ENCODE measurements at regions of chr5 and their contacts with region 1.

Region 1: GRCh38 chr5:56056875-56057274 is 62.1 kb upstream of the IL6ST start:
- DNase-seq: peak; percentile 85
- ATAC-seq: peak; percentile 78
- H3K4me3 ChIP-seq: 0 out of 2 replicates have a peak overlapping the region, but pooled peaks have one; percentile 8
- H3K27ac ChIP-seq: peak overlapping the region; percentile 47; the same call in 1 of the 2 replicates
- H3K4me1 ChIP-seq: peaks cover 41% of the 10 kb centered on the region
- H3K27me3 ChIP-seq: no peaks in the 10 kb centered on the region
- CTCF ChIP-seq: no peak
- EP300 ChIP-seq: peak in 1 of 2 experiments; percentile 48; a peak in 1 of 4 replicates
- POLR2A ChIP-seq: no peak
- RAD21 ChIP-seq: no peak

Region 2: DNA sequence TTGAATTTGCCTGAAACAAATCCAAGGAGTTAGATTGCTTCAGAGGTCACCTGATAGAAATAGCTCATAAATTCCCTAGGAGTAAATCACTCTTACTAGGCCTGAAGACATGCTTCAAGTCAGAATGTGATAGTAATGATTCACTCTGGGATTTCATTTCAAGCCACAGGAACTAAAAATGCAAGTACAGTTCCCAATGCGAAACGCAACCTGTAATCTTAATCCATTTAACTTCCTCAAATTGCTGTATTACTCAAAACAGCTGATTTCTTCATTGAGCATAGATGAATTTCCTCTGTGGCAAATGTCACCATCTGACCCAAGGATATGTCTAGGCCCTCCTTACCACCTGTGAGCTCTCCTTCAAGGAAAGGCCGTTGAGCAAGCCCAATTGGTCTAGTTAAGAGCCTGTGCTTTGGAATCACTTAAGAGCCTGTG is 30.0 kb before region 1 on chr5:
- CTCF ChIA-PET with region 1: no interaction called
- POLR2A ChIA-PET with region 1: interaction called, 3 read pairs
- RAD21 ChIA-PET with region 1: interaction called, 5 read pairs
- SMC1A ChIA-PET with region 1: interaction called, 13 read pairs
- in situ Hi-C with region 1: no loop called
- intact Hi-C with region 1: loop called (anchors 2 kb)
- DNase-seq: peak; percentile 89
- ATAC-seq: peak; percentile 83
- H3K4me3 ChIP-seq: no peak overlapping the region
- H3K27ac ChIP-seq: no peak overlapping the region
- H3K4me1 ChIP-seq: peaks cover 19% of the 10 kb centered on the region
- H3K27me3 ChIP-seq: no peaks in the 10 kb centered on the region
- CTCF ChIP-seq: no peak
- EP300 ChIP-seq: peak; percentile 89 to 96
- POLR2A ChIP-seq: no peak
- RAD21 ChIP-seq: no peak

Region 3: DNA sequence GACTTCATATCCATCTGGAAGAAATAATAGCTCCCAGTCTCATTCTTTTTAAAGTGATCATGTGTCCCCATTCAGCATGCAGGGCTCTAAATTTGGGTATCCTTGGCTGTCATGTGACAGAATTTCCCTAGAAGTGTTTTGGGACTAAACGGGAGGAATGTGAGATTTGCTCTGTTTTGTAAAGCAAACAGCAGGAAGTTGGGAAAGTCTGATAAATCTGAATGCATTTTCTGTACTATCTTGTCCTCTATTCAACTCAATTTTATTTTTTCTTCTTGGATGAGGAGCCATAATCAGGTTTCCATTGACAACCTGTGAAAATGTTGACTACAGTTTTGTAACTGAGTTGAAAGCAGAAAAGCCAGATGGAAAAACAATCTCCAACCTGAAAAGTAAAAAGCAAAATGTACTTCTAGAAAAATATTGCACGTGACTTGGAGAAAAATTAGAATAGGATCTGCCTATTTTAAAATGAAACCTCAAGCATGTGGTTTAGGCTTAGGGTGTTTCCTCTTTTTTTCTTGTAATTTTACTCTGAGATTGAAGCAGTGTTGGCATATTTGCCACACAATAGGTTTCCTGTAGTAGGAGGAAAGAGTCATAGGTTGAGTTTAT is 14.1 kb after region 1 on chr5:
- CTCF ChIA-PET with region 1: interaction called, 7 read pairs
- POLR2A ChIA-PET with region 1: interaction called, 3 read pairs
- RAD21 ChIA-PET with region 1: interaction called, 10 read pairs
- SMC1A ChIA-PET with region 1: interaction called, 42 read pairs
- in situ Hi-C with region 1: no loop called
- intact Hi-C with region 1: no loop called
- DNase-seq: no peak
- ATAC-seq: peak; percentile 69
- H3K4me3 ChIP-seq: no peak overlapping the region
- H3K27ac ChIP-seq: no peak overlapping the region
- H3K4me1 ChIP-seq: peaks cover 6% of the 10 kb centered on the region
- H3K27me3 ChIP-seq: no peaks in the 10 kb centered on the region
- CTCF ChIP-seq: no peak
- EP300 ChIP-seq: no peak
- POLR2A ChIP-seq: no peak
- RAD21 ChIP-seq: no peak

Region 4: GRCh38 chr5:56088967-56089829 is 32.3 kb after region 1 on chr5:
- CTCF ChIA-PET with region 1: interaction called, 6 read pairs
- POLR2A ChIA-PET with region 1: interaction called, 18 read pairs
- RAD21 ChIA-PET with region 1: interaction called, 45 read pairs
- SMC1A ChIA-PET with region 1: interaction called, 49 read pairs
- in situ Hi-C with region 1: no loop called
- intact Hi-C with region 1: loop called (anchors 2 kb)
- DNase-seq: peak; percentile 74
- ATAC-seq: peak; percentile 95
- H3K4me3 ChIP-seq: no peak overlapping the region
- H3K27ac ChIP-seq: peak overlapping the region; percentile 41
- H3K4me1 ChIP-seq: peaks cover 8% of the 10 kb centered on the region
- H3K27me3 ChIP-seq: no peaks in the 10 kb centered on the region
- CTCF ChIP-seq: no peak
- EP300 ChIP-seq: no peak
- POLR2A ChIP-seq: no peak
- RAD21 ChIP-seq: no peak

Measured in GM12878 (cell line).